Aorta (tissue), 5 donors: ENCODE measurements at regions of chr20 and their contacts with region 1.

Region 1: DNA sequence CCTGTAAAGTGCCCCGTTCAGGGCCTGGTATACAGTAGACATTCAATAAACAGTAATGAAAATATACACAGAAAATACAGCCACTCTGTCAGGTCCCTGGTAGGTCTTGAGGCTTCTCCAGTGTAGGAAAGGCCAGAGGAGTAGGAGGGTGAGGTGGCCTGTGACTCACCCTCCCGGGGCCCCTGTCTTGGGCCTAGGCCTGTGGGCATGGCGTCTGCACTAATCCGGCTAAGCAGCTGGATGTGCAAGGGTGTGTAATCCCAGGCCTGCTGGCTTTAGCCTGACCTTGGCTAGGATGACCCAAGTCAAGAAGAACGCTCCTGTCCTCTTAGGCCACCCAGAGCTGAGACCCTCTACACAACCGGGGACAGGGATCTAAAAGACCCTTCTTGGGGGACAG is 84.9 kb downstream of the KCNB1 start:
- DNase-seq: peak in 1 of 2 donors; percentile 55
- ATAC-seq: no peak
- H3K4me3 ChIP-seq: no peak overlapping the region
- H3K27ac ChIP-seq: no peak overlapping the region
- H3K4me1 ChIP-seq: no peaks in the 10 kb centered on the region
- H3K27me3 ChIP-seq: no peaks in the 10 kb centered on the region

Region 2: GRCh38 chr20:49344975-49345374 is 52.5 kb before region 1 on chr20:
- intact Hi-C with region 1: loop called in 1 of 2 experiments (anchors 10 kb)
- DNase-seq: peak; percentile 75 to 84
- ATAC-seq: peak; percentile 82
- H3K4me3 ChIP-seq: no peak overlapping the region
- H3K27ac ChIP-seq: peak overlapping the region in 1 of 2 donors; percentile 13
- H3K4me1 ChIP-seq: no peaks in the 10 kb centered on the region
- H3K27me3 ChIP-seq: no peaks in the 10 kb centered on the region

Region 3: DNA sequence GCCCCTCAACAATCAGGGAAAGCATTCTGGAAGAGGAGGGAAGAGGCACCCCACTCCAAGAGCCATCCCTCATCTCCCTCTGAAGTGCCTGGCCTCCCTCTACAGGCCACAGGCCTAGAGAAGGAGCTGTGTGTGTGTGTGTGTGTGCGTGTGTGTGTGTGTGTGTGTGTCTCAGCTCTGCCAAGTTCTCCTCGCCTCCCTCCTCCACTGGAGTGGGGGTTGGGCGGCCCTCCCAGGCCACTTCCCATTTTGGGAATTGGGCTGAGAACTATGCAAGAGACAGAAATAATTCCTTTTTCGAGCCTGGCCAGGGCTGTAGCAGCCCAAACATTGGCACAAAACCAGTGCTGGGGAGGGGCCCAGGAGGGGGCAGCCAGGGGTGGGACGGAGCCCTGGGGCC is 49.3 kb after region 1 on chr20:
- intact Hi-C with region 1: loop called in 1 of 2 experiments (anchors 5 kb)
- DNase-seq: peak; percentile 95
- ATAC-seq: peak; percentile 93
- H3K4me3 ChIP-seq: no peak overlapping the region
- H3K27ac ChIP-seq: peak overlapping the region in 1 of 2 donors; percentile 74
- H3K4me1 ChIP-seq: peaks cover 0 to 2% of the 10 kb centered on the region in 2 donors
- H3K27me3 ChIP-seq: no peaks in the 10 kb centered on the region